ENCODE measurements at regions of chr1 and their contacts with region 1.

Region 1: DNA sequence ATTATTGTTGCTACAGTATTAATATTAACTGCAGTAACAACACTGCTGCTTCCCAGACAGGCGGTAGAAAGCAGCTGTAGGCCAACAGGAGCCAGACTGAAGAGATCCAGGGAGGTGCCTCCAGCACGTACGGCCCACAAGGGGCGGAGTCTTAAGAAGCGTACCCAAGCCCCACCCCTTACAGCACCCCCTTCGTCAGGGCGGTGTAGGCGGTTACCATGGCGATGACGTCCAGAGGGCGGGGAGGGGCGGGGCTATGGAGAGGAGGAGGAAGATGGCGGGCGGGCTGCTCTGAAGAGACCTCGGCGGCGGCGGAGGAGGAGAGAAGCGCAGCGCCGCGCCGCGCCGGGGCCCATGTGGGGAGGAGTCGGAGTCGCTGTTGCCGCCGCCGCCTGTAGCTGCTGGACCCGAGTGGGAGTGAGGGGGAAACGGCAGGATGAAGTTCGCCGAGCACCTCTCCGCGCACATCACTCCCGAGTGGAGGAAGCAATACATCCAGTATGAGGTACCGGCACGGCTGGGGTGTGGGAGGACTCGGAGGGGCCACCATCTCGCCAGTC is at the start of gene XPR1:
- DNase-seq: peak; percentile 93 to 100 (median 99)

Region 2: DNA sequence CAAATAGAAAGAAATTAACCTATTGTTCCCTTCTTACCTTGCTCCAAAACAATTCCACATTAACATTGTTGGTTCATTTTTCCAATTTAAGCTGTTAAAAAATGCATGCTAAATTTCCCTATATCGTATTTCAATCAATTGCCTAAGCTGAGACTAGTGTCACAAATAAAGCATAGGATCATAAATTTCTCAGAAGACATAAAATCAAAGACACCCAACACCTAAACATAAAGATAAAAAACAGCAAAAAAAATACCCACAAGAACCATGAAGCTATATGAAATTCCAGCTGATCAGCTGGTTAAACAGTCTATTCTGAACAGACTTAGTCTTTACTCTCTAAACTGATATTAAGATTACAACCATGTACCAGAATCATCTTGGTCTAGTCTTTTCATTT is 161.8 kb before region 1 on chr1:
- intact Hi-C with region 1: no loop called
- DNase-seq: no peak

Region 3: GRCh38 chr1:180515864-180516388 is 115.9 kb before region 1 on chr1:
- intact Hi-C with region 1: loop called (anchors 10 kb)
- DNase-seq: peak; percentile 31 to 91 (median 72)

Region 4: GRCh38 chr1:180698580-180698979 is 66.7 kb after region 1 on chr1:
- intact Hi-C with region 1: no loop called
- DNase-seq: no peak

Region 5: DNA sequence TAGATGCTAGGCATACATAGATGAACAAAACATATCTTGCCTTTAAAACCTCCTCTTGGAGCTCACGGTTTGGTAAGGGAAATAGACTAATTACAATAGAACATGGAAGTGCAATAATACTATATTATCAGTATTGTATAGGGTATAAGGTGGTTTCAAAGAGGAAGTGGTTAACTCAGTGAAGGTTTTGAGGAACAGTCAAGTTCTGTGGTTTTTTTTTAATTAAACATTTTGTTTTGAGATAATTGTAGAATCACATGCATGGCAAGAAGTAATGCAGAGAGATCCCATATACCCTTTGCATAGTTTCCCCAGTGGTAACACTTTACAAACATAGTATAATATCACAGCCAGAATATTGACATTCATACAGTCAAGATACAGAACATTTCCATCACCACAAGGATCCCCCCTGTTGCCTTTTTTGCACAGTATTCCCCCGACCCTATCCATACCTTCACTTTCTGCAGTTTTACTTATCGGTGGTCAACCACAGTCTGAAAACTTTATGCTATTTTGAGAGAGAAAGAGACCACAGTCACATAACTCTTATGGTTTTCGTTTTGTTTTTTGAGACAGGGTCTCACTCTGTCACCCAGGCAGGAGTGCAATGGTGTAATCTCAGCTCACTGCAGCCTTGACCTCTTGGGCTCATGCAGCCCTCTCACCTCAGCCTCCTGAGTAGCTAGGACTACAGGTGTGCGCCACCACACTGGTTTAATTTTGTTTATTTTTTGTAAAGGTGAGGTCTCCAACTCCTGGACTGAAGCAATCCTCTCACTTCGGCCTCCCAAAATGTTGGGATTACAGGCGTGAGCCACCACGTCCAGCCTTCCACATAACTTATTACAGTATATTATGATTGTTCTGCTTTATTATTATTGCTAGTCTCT is 220.4 kb after region 1 on chr1:
- intact Hi-C with region 1: loop called (anchors 10 kb)
- DNase-seq: no peak

Measured in head of caudate nucleus (tissue), 42 donors.